ENCODE measurements at regions of chr6 and their contacts with region 1.

Region 1: DNA sequence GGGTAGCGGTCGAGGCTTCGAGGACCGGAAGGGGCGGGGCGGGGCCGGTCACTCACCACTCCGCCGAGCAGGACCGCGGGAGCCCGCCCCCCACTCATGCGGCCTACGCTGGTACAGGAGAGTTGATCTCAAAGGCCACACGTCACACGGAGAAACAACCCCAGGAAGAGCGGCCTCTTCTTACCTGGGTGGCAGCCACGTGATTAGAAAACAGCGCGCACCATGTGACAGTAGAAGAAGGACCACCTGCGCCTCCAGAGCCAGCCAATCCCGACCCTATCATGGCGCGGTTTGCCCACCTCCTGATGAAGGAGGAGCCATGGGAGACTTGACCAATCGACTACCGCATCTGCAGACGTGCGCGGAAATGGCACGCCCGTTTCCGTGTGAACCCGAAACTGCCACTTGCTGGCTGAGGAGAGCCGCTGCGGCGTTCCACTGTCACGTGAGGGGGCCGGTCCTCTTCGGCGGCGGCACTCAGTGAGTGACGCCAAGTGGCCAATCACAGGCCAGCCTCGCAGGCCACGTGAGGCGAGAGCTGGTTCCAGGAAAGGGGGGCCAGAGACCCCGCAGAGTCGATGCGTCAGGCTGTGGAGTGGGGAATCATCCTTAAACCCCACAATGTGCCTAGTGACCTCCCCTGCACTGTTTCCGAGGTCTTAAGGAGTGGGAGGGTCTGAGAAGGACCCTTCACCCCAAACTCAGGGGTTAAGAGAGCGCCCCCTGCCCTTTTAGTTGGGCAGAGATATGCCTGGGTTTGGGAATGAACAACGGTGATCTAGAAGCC is at the start of gene CUTA:
- DNase-seq: peak; percentile 100
- H3K4me3 ChIP-seq: peak within 1 kb of the TSS; percentile 57 to 97 (median 86)
- H3K27ac ChIP-seq: peak within 1 kb of the TSS; percentile 52 to 99 (median 97)
- H3K27me3 ChIP-seq: no peaks in the 10 kb centered on the region
- CTCF ChIP-seq: peak in 55 of 56 donors; percentile 31 to 79 (median 62)
- total RNA-seq, gene CUTA: 118 to 222 (median 177) TPM

Region 2: GRCh38 chr6:33061987-33062386 is 356.1 kb before region 1 on chr6:
- intact Hi-C with region 1: no loop called
- DNase-seq: no peak
- H3K4me3 ChIP-seq: no peak overlapping the region
- H3K27ac ChIP-seq: no peak overlapping the region
- H3K27me3 ChIP-seq: no peaks in the 10 kb centered on the region
- CTCF ChIP-seq: no peak

Region 3: GRCh38 chr6:33579828-33580714 is 162.0 kb after region 1 on chr6 and contains the start of gene BAK1:
- intact Hi-C with region 1: loop called in 1 of 2 experiments (anchors 10 kb)
- DNase-seq: peak; percentile 79 to 97 (median 94)
- H3K4me3 ChIP-seq: peak within 1 kb of the TSS; percentile 65 to 97 (median 86)
- H3K27ac ChIP-seq: peak within 1 kb of the TSS; percentile 31 to 96 (median 86)
- H3K27me3 ChIP-seq: no peaks in the 10 kb centered on the region
- CTCF ChIP-seq: peak; percentile 28 to 81 (median 66)
- total RNA-seq, gene BAK1: 6.4 to 17.0 (median 10.8) TPM

Measured in dorsolateral prefrontal cortex (tissue), 120 donors.